Right cardiac atrium (tissue), 5 donors: ENCODE measurements at regions of chr17 and their contacts with region 1.

Region 1: DNA sequence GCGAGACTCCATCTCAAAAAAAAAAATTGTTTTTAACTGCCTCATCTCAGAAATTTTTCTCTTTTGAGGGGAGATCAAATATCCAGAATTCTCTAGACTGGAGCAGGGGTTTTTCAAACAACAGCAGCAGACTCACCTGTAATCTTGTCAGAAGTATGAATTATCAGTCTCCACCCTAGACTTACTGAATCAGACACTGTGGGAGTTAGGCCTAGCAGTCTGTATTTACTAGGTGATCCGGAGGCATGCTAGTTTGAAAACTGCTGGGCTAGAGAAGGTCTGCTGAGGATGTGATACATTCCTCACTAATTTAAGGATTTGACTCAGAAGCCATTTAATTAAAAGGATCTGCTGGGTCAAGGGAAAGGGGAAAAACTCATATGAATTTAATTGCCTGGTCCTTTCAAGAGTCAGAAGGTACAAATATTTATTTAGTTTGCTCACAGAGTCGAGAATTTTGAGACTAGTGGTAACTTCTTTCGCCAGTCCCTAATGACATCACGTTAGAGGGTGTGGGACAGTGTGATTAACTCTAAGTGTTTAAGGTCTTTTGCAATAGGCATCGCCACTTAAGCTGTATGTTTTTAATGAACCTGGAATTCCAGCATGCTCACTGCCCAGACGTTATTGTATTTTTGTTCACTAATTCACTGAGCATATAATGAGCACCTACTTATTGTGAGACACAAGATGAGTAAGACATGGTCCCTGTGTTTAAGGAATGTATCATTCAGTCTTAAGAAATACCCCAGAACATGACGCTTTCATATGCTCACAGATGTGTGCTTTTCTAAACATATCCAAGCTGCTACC is 14.2 kb downstream of the ATP6V0A1 start:
- DNase-seq: no peak
- ATAC-seq: no peak
- H3K4me3 ChIP-seq: no peak overlapping the region
- H3K27ac ChIP-seq: no peak overlapping the region
- H3K4me1 ChIP-seq: no peaks in the 10 kb centered on the region
- H3K27me3 ChIP-seq: no peaks in the 10 kb centered on the region

Region 2: GRCh38 chr17:42508426-42509165 is 35.7 kb after region 1 on chr17:
- intact Hi-C with region 1: loop called in 1 of 4 experiments (anchors 5 kb)
- DNase-seq: no peak
- ATAC-seq: peak in 1 of 2 donors; percentile 44
- H3K4me3 ChIP-seq: no peak overlapping the region
- H3K27ac ChIP-seq: no peak overlapping the region
- H3K4me1 ChIP-seq: peaks cover 8% of the 10 kb centered on the region
- H3K27me3 ChIP-seq: no peaks in the 10 kb centered on the region

Region 3: DNA sequence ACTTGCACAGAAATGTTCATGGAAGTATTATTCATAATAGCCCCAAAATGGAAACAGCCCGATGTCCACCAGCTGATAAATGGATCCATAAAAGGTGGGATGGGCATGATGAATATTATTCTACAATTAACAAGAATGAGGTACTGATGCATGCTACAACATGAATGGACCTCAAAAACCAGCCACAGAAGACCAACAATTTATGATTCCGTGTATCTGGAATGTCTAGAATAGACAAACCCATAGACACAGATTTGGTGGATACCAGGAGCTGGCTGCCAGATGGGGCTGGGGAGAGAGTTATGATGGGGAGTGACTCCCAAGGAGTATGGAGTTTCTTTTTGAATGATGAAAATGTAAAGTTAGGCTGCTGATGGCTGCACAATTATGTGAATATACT is 52.3 kb after region 1 on chr17:
- intact Hi-C with region 1: no loop called
- DNase-seq: no peak
- ATAC-seq: no peak
- H3K4me3 ChIP-seq: no peak overlapping the region
- H3K27ac ChIP-seq: no peak overlapping the region
- H3K4me1 ChIP-seq: peaks cover 16% of the 10 kb centered on the region
- H3K27me3 ChIP-seq: no peaks in the 10 kb centered on the region

Region 4: DNA sequence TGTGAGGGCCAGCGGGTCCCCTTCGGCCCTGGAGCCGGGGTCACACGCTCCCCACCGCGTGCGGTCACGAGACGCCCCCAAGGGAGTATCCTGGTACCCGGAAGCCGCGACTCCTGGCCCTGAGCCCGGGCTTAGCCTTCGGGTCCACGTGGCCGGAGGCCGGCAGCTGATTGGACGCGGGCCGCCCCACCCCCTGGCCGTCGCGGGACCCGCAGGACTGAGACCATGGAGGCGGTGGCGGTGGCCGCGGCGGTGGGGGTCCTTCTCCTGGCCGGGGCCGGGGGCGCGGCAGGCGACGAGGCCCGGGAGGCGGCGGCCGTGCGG is 63.1 kb after region 1 on chr17 and contains the start of gene NAGLU:
- intact Hi-C with region 1: no loop called
- DNase-seq: peak; percentile 98 to 99 (median 99)
- ATAC-seq: peak; percentile 90 to 93
- H3K4me3 ChIP-seq: peak within 1 kb of the TSS; percentile 88
- H3K27ac ChIP-seq: peak within 1 kb of the TSS; percentile 92
- H3K4me1 ChIP-seq: peaks cover 7% of the 10 kb centered on the region
- H3K27me3 ChIP-seq: no peaks in the 10 kb centered on the region
- total RNA-seq, gene NAGLU: 11.3 to 18.8 (median 15.0) TPM

Region 5: DNA sequence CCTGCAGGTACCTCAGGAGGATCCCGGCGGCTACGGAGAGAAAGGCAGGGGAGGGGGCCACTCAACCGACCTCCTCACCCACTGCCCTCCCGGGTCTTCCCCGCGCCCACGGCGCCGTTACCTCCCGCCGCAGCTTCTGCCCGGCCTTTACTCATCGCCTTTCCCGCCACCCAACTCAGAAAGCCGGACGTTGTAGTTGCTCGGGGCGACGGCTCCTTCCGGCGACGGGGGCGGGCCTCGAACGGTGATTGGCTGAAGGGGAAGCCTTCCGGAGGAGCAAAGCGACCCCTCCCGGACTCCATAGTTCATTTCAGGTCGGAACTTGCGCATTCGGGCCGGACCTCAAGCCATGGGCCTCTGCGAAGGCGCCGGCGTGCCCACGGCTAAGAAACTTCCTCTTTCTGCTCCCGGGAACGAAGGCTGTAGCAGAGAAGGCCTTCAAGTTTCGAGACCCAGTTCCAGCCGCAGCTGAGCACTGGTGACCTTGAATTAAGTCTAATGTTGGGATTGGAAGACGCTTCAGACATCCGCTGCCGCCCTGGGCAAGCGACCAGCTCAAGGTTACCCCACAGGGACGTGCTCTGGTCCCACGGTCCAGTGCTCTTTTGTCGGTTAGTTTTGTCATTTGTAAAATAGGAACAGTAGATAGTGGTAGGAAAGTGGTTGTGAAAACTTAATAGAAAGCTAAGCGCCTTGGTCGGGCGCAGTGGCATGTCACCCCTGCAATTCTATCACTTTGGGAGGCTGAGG is 104.8 kb after region 1 on chr17 and contains the start of gene PSMC3IP:
- intact Hi-C with region 1: no loop called
- DNase-seq: peak; percentile 97 to 98 (median 97)
- ATAC-seq: peak; percentile 95
- H3K4me3 ChIP-seq: peak within 1 kb of the TSS; percentile 60
- H3K27ac ChIP-seq: peak within 1 kb of the TSS; percentile 85
- H3K4me1 ChIP-seq: no peaks in the 10 kb centered on the region
- H3K27me3 ChIP-seq: no peaks in the 10 kb centered on the region
- total RNA-seq, gene PSMC3IP: 1.4 to 3.3 (median 2.5) TPM